T-cell (primary cell): ENCODE measurements at regions of chr19 and their contacts with region 1.

Region 1: GRCh38 chr19:10986261-10987127 is 25.7 kb downstream of the SMARCA4 start:
- DNase-seq: no peak
- ATAC-seq: no peak
- H3K4me3 ChIP-seq: no peak overlapping the region
- H3K4me3 Mint-ChIP-seq: no peak overlapping the region
- H3K27ac ChIP-seq: no peak overlapping the region
- H3K27ac Mint-ChIP-seq: no peak overlapping the region
- H3K4me1 ChIP-seq: no peaks in the 10 kb centered on the region
- H3K4me1 Mint-ChIP-seq: no peaks in the 10 kb centered on the region
- H3K27me3 ChIP-seq: no peaks in the 10 kb centered on the region
- H3K27me3 Mint-ChIP-seq: no peaks in the 10 kb centered on the region

Region 2: GRCh38 chr19:11016631-11017030 is 30.1 kb after region 1 on chr19:
- CTCF ChIA-PET with region 1: no interaction called
- POLR2A ChIA-PET with region 1: interaction called in 1 of 2 experiments, 11 read pairs
- DNase-seq: no peak
- ATAC-seq: no peak
- H3K4me3 ChIP-seq: no peak overlapping the region
- H3K4me3 Mint-ChIP-seq: no peak overlapping the region
- H3K27ac ChIP-seq: no peak overlapping the region
- H3K27ac Mint-ChIP-seq: no peak overlapping the region
- H3K4me1 ChIP-seq: no peaks in the 10 kb centered on the region
- H3K4me1 Mint-ChIP-seq: no peaks in the 10 kb centered on the region
- H3K27me3 ChIP-seq: no peaks in the 10 kb centered on the region
- H3K27me3 Mint-ChIP-seq: no peaks in the 10 kb centered on the region